Dendritic cell treated with granulocyte-macrophage colony-stimulating factor and Interleukin-4, amounts not matched to agents 40 ng/mL and 50 ng/mL, for 4 days (primary cell): ENCODE measurements at regions of chr1 and their contacts with region 1.

Region 1: DNA sequence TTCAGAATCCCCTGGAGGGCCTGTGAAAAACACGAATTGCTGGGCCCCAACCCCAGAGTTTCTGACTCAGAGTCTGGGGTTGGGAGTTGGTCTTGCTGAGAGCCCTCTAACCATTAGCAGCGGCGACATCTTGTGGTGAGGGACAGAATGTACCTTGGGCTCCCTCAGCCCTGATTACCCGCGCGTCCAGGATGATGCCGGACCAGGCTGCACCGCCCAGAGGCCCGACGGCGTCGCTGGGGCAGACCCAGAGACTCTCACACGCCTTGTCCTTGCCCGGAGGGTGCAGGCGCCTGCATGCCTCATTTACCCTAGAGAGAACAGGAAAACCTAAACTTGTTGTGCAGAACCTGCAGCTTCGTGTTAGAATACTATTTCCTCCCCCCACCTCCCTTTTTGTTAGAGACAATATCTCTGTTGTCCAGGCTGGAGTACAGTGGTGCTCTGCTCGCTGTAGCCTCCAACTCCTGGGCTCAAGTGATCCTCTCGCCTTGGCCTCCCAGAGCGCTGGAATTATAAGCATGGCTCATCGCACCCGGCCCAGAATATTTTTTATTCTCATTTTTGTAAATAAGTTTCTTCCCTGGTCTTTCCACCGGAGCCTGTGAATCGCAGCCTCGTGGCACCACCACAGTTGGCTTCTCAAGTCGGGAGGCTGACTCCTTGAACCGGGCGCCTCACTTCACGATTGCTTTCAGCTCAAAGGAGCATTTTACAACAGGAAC is 22.2 kb upstream of the RD3 start:
- H3K4me3 Mint-ChIP-seq: no peak overlapping the region
- H3K27ac Mint-ChIP-seq: no peak overlapping the region
- H3K4me1 Mint-ChIP-seq: peaks cover 45% of the 10 kb centered on the region
- H3K27me3 Mint-ChIP-seq: peaks cover 28% of the 10 kb centered on the region

Region 2: GRCh38 chr1:211217392-211217791 is 296.8 kb before region 1 on chr1:
- intact Hi-C with region 1: no loop called
- H3K4me3 Mint-ChIP-seq: no peak overlapping the region
- H3K27ac Mint-ChIP-seq: no peak overlapping the region
- H3K4me1 Mint-ChIP-seq: no peaks in the 10 kb centered on the region
- H3K27me3 Mint-ChIP-seq: peaks cover 3% of the 10 kb centered on the region

Region 3: GRCh38 chr1:211492511-211493132 is 21.6 kb before region 1 on chr1:
- intact Hi-C with region 1: no loop called
- H3K4me3 Mint-ChIP-seq: no peak overlapping the region
- H3K27ac Mint-ChIP-seq: no peak overlapping the region
- H3K4me1 Mint-ChIP-seq: no peaks in the 10 kb centered on the region
- H3K27me3 Mint-ChIP-seq: no peaks in the 10 kb centered on the region

Region 4: DNA sequence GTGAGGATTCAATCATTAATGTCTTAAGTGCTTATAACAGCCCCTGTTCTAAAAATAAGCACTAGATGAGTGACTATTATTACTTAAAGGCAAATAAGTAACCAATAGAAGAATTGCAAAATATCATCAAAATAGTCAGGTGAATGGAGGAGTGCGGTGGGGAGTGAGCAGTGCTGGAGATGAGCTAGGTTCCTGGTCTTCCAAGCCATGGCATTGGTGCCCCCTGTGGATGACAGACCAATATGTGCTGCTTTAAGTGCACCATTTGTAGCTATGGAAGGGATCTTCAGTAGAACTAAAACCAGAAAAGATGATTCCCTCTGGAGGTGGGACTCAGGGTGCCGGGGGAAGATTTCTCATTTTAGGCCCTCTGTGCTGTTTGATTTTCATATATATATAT is 110.8 kb after region 1 on chr1:
- intact Hi-C with region 1: loop called (anchors 1 kb)
- H3K4me3 Mint-ChIP-seq: no peak overlapping the region
- H3K27ac Mint-ChIP-seq: no peak overlapping the region
- H3K4me1 Mint-ChIP-seq: peaks cover 7% of the 10 kb centered on the region
- H3K27me3 Mint-ChIP-seq: peaks cover 4% of the 10 kb centered on the region